Ascending aorta (tissue), 2 donors: ENCODE measurements at regions of chr1 and their contacts with region 1.

Region 1: DNA sequence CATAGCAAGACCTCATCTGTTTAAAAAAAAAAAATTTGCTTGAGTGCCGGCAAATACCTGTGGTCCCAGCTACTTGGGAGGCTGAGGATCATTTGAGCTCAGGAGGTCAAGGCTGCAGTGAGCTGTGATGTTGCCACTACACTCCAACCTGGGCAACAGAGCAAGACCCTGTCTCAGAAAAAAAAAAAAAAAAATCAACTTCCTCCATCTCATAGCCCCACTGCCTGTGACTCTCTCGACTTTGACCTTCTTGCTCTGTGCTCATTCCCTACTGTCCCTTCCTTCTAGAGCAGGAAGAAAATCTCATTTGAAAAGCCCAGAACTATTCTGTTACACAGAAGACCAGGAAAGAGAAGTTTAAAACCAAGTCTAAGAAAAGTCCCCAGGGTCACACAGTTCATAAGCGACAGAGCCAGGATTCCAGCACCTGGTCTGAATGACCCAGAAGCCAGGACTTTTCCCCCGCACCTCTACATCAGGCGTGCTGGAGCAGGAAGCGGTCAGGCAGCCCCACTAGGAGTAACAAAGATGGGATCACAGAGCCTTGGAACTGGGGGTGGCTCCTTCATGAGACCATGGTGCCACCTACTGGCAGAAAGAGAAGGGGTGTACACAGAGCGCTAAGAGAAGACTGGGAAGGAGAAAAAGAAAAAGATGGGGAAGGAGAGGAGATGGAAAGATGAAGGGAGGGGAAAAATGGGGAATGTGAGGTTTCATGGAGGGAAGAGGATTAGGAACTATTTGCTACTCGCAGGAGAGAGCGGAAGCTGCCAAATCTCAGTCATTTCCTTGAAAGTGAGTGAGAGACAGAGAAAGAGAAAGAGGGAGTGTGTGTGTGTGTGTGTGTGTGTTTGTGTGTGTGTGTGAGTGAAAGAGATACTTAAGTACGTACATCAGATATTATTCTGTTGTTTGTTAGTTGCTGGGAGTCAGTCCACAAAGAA is 3.1 kb upstream of the P3R3URF start:
- DNase-seq: peak; percentile 27 to 91
- H3K4me3 ChIP-seq: no peak overlapping the region
- H3K27ac ChIP-seq: peak overlapping the region in 1 of 2 donors; percentile 44
- H3K4me1 ChIP-seq: peaks cover 8 to 13% of the 10 kb centered on the region in 2 donors
- H3K27me3 ChIP-seq: no peaks in the 10 kb centered on the region
- CTCF ChIP-seq: peak; percentile 81 to 96 (median 88)

Region 2: DNA sequence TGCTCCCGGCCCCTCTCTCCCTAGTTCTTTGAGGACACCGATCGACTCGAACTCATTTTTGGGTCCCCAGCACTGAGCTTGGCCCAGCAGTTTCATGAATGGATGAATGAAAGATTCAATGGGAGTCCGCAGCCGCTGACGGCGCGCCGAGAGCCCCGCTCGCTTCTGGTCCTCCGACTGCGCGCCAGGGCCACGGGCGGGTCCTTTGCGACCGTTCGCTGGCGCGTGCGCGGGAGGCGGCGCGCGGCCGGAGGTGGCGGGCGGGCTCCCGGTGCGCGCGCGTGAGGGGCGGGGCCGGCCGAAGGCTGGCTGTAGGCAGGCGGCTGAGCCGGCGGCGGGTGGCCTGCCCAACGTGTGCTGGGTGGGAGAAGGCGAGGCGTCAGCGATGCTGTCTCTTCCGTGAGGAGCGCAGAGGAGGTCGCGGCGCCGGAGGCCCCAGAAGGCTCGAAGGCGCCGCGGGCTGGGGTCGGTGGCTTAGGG is 376.1 kb before region 1 on chr1 and contains the start of gene MAST2:
- intact Hi-C with region 1: loop called (anchors 2 kb)
- DNase-seq: peak; percentile 45 to 93
- H3K4me3 ChIP-seq: peak within 1 kb of the TSS; percentile 76 to 84
- H3K27ac ChIP-seq: peak within 1 kb of the TSS; percentile 79 to 91
- H3K4me1 ChIP-seq: peaks cover 11 to 13% of the 10 kb centered on the region in 2 donors
- H3K27me3 ChIP-seq: no peaks in the 10 kb centered on the region
- CTCF ChIP-seq: no peak
- total RNA-seq, gene MAST2: 61.0 TPM

Region 3: DNA sequence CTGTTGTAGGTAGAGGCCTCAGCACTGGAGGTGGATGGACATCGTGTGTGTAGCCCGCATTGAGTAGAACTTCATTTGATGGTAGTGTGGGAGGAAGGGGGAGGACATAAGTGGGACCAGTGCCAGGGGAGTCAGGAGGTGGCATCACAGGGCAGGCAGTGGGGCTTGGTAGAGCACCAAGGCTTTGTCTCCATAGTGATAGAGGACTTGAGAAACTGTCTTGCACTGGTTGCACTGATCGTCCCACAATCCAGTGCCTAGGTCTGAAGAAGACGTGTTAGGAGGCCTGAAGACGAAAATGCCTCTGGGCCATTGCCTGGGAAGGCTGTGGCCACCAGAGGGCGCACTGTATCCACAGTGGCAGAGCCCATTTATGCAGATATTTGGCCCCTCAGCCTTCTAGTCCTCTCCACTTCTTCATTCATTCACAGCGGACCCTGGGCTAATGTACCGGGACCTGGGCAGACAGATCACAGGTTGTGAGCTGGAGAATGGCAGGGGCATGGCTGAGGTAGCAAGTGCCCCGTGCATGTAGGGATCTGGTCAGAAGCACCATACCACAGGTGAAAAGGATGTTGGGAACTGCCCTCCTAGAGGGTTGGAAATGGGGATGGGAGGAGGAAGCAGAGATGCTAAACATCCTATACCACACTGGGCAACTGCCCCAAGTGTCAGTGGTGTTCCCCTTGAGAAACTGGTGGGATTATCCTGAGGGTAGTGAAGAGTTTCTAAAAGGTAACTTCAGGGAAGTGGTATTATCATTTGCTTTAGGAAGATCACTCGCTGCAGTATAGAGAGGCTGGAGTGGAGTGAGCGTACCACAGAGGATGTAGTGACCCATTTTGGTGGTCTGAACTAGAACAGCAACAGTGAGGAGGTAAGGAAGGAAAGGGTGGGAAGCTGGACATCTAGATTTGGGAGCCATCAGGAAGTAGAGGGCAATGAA is 142.2 kb before region 1 on chr1:
- intact Hi-C with region 1: loop called (anchors 1 kb)
- DNase-seq: peak; percentile 33 to 93
- H3K4me3 ChIP-seq: no peak overlapping the region
- H3K27ac ChIP-seq: no peak overlapping the region
- H3K4me1 ChIP-seq: no peaks in the 10 kb centered on the region
- H3K27me3 ChIP-seq: no peaks in the 10 kb centered on the region
- CTCF ChIP-seq: peak; percentile 96 to 97 (median 96)

Region 4: DNA sequence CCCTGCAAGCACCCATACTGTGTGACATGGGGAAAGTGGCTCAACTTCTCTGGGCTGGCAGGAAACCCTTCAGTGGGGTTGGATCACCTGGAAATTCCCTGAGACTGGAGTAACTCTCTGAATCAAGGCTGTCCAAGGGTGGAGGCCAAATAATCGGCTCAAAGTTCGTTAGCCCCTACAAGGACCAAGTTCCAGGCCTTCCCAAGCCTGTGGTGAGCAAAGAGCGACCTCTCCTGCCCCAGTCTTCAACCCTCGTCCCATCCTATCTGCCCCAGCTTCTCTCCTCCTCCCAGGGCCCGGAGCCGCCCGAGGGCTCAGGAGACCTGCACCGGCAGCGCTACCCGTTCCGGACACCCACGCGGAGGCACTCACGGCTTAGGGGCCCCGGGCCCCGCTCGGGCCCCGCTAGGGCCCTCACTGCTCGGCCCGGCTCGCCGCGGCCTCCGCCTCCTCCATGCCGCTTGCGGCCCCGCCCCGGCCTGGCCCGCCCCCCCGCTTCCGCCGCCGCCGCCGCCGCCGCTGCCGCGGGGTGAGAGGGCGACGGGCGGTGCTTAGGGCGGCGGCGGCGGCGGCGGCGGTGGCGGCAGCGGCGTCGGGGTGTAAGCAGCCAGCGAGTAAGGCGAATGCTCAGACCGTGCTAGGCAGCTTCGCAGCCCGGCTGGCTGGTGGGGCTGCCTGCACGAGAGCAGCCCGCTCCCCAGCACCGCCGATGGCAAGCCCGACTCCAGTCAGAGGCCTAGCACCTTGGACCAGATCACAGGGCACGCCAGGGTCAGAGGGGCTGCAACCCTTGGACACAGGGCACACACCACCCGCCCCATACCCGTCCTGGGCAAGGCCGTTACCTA is 18.8 kb after region 1 on chr1 and contains the start of gene POMGNT1:
- intact Hi-C with region 1: loop called (anchors 1 kb)
- DNase-seq: peak in 1 of 2 donors; percentile 84
- H3K4me3 ChIP-seq: peak within 1 kb of the TSS; percentile 86
- H3K27ac ChIP-seq: peak within 1 kb of the TSS; percentile 82 to 88
- H3K4me1 ChIP-seq: peaks cover 4 to 22% of the 10 kb centered on the region in 2 donors
- H3K27me3 ChIP-seq: no peaks in the 10 kb centered on the region
- CTCF ChIP-seq: peak in 1 of 3 experiments; percentile 20
- total RNA-seq, gene POMGNT1: 122 TPM

Region 5: GRCh38 chr1:46223472-46223943 is 44.1 kb after region 1 on chr1:
- intact Hi-C with region 1: loop called (anchors 1 kb)
- DNase-seq: peak in 1 of 2 donors; percentile 87
- H3K4me3 ChIP-seq: no peak overlapping the region
- H3K27ac ChIP-seq: peak overlapping the region in 1 of 2 donors; percentile 15
- H3K4me1 ChIP-seq: peaks cover 0 to 5% of the 10 kb centered on the region in 2 donors
- H3K27me3 ChIP-seq: no peaks in the 10 kb centered on the region
- CTCF ChIP-seq: peak; percentile 79 to 93 (median 91)

Region 6: DNA sequence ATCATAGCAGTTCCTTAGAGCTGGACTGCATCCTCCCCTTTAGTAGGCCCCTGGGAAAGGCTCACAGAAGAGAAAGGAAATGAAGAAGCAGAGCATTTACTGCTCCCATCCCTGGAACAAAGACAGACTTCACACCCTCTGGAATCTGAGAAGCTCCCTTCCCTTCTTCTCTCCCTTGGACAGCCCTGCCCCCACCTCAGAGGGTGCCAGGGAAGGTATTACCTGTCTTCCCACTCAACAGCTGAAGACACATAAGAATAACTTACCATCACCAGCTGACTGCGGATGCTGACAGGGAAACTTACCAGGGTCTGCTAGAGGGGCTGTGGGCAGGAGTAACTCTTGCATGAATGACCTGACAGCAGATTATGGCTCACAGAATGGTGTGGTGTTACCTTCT is 200.6 kb after region 1 on chr1:
- intact Hi-C with region 1: no loop called
- DNase-seq: no peak
- H3K4me3 ChIP-seq: no peak overlapping the region
- H3K27ac ChIP-seq: no peak overlapping the region
- H3K4me1 ChIP-seq: no peaks in the 10 kb centered on the region
- H3K27me3 ChIP-seq: no peaks in the 10 kb centered on the region
- CTCF ChIP-seq: no peak